ENCODE measurements at regions of chr18 and their contacts with region 1.

Region 1: GRCh38 chr18:839224-840022 is 27.4 kb upstream of the YES1 start:
- DNase-seq: peak; percentile 19 to 92
- H3K4me3 ChIP-seq: no peak overlapping the region
- H3K27ac ChIP-seq: no peak overlapping the region
- H3K4me1 ChIP-seq: peaks cover 0 to 5% of the 10 kb centered on the region in 2 donors
- H3K27me3 ChIP-seq: no peaks in the 10 kb centered on the region
- CTCF ChIP-seq: peak; percentile 71 to 98 (median 98)

Region 2: DNA sequence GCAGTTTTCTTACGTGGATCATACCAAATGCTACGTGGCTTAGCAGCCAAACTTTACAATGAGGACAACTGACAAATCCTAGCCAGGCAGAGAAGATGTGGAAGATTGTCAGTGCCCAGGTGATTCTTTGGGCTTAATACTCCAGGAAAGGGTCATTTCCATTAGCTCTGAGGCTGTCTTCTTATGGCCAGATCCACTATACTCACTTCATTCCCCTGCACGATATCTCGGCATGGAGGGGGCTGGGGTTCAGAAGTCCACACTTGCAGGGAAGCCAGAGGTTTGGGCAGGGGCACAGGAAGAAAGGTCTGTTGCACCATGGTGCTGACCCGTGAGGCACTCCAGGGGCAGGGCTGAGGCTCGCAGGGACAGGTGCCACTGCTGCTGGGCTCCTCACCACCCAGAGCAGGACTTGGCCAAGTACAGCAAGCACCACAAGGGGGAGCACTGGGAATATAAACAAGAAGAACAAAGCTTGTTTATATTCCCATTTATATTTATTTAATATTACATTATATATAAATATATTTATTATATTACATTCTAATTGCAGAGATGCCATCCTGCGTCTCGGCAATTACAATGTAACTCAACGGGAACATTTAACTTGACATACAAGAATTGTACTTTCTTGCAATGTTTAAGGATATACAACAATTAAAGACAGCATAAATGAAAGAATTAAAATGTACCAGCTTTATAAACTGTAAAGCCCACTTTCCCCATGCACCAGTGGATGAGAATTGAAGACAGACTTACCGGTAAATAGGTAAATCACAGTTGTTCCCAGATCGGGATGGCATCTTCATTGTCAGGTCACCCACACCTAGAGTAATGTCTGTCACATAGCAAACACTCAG is 215.4 kb before region 1 on chr18:
- intact Hi-C with region 1: loop called (anchors 5 kb)
- DNase-seq: no peak
- H3K4me3 ChIP-seq: no peak overlapping the region
- H3K27ac ChIP-seq: no peak overlapping the region
- H3K4me1 ChIP-seq: no peaks in the 10 kb centered on the region
- H3K27me3 ChIP-seq: no peaks in the 10 kb centered on the region
- CTCF ChIP-seq: peak; percentile 14 to 62 (median 49)

Region 3: DNA sequence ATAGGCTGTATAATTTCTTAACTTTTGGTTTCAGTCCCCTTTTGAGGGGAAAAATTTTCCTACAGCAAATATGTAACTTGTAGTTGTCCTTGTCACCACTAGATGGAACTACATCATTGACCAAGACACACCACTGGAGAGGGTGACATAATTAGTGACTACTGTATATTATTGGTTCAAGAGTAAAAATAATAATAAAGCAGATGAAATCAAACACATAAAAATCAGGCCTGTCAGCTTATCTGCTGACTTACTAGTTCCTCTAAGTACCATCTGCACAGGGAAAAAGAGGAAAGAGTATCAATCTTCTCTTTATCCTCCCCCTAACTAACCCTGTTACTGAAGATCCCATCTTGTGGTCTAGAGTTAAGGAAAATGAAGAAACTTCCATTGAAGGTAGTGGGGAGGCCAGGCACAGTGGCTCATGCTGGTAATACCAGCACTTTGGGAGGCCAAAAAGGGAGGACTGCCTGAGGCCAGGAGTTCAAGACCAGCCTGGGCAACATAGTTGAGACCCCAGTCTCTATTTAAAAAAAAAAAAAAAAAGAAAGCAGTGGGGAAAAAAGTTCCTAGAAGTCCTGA is 97.4 kb before region 1 on chr18:
- intact Hi-C with region 1: loop called (anchors 2 kb)
- DNase-seq: no peak
- H3K4me3 ChIP-seq: no peak overlapping the region
- H3K27ac ChIP-seq: no peak overlapping the region
- H3K4me1 ChIP-seq: no peaks in the 10 kb centered on the region
- H3K27me3 ChIP-seq: no peaks in the 10 kb centered on the region
- CTCF ChIP-seq: peak; percentile 61 to 73 (median 66)

Measured in ascending aorta (tissue), 2 donors.